Posterior cingulate gyrus (tissue), 11 donors: ENCODE measurements at regions of chr6 and their contacts with region 1.

Region 1: DNA sequence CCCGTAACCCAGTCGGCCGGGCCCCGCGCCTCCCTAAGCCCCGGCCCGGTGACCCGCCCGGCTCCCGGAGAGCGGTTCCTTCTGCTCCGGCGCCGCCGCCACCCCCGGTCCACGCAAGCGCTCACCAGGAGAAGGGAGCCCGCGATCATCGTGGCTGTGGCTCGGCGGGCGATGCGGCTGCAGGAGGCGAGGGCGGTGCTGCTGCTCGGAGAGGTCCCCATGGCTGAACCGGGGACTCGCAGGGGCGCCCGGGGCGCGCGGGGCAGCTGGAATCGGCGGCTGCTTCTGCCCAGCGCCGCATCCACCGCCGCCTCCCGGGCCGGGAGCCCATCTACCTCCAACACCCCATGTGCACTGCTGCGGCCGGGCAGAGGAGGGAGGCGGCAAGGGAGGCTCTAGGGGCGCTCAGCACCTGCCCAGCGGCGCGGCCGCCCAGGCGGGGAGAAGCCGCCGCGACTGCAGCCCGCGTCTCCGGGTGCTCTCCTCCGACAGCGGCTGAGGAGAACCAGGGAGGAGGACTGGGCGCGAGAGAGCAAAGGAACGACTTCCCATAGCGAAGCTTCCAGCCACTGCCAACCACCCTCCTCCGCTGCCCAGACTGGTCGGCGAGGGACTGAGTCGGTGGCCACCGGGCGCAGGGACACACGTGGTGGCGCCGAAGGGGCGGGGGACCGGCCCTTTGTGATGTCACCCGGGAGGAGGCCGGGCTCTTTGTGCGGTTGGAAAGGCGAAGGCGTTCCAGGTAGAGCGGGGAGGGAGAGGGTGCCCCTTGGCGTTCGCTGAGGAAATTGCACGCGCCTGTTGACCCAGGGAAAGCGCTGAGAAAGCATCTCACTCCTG is at the start of gene TNFRSF21:
- DNase-seq: peak; percentile 91 to 99 (median 95)

Region 2: GRCh38 chr6:47057830-47058540 is 251.5 kb before region 1 on chr6:
- intact Hi-C with region 1: no loop called
- DNase-seq: no peak

Region 3: GRCh38 chr6:47097092-47097945 is 212.2 kb before region 1 on chr6:
- intact Hi-C with region 1: loop called (anchors 1 kb)
- DNase-seq: peak in 9 of 10 donors; percentile 39 to 93 (median 64)

Region 4: GRCh38 chr6:47242483-47243386 is 66.8 kb before region 1 on chr6:
- intact Hi-C with region 1: loop called (anchors 10 kb)
- DNase-seq: peak; percentile 34 to 96 (median 63)

Region 5: GRCh38 chr6:47413752-47414422 is 104.4 kb after region 1 on chr6:
- intact Hi-C with region 1: no loop called
- DNase-seq: peak in 5 of 10 donors; percentile 18 to 77 (median 30)